ENCODE measurements at regions of chr9 and their contacts with region 1.

Region 1: GRCh38 chr9:13351778-13352386 is 72.4 kb upstream of the MPDZ start:
- DNase-seq: no peak
- H3K4me3 ChIP-seq: no peak overlapping the region
- H3K27ac ChIP-seq: no peak overlapping the region
- H3K4me1 ChIP-seq: no peaks in the 10 kb centered on the region
- H3K27me3 ChIP-seq: no peaks in the 10 kb centered on the region
- CTCF ChIP-seq: peak; percentile 9

Region 2: GRCh38 chr9:13279284-13280141 is 72.4 kb before region 1 on chr9 and contains the start of gene MPDZ:
- intact Hi-C with region 1: no loop called
- DNase-seq: peak; percentile 18
- H3K4me3 ChIP-seq: peak within 1 kb of the TSS; percentile 34
- H3K27ac ChIP-seq: peak within 1 kb of the TSS; percentile 47
- H3K4me1 ChIP-seq: no peaks in the 10 kb centered on the region
- H3K27me3 ChIP-seq: no peaks in the 10 kb centered on the region
- CTCF ChIP-seq: no peak
- total RNA-seq, gene MPDZ: 2.3 to 8.1 TPM

Region 3: GRCh38 chr9:14428781-14429230 is 1076.9 kb after region 1 on chr9:
- intact Hi-C with region 1: loop called (anchors 5 kb)
- DNase-seq: peak; percentile 64
- H3K4me3 ChIP-seq: no peak overlapping the region
- H3K27ac ChIP-seq: no peak overlapping the region
- H3K4me1 ChIP-seq: no peaks in the 10 kb centered on the region
- H3K27me3 ChIP-seq: no peaks in the 10 kb centered on the region
- CTCF ChIP-seq: peak; percentile 77

Measured in colonic mucosa (tissue), 4 donors.